Aorta (tissue), 5 donors: ENCODE measurements at regions of chr9 and their contacts with region 1.

Region 1: GRCh38 chr9:115109486-115109885 is 8.5 kb downstream of the TNC start:
- DNase-seq: no peak
- ATAC-seq: no peak
- H3K4me3 ChIP-seq: no peak overlapping the region
- H3K27ac ChIP-seq: no peak overlapping the region
- H3K4me1 ChIP-seq: no peaks in the 10 kb centered on the region
- H3K27me3 ChIP-seq: no peaks in the 10 kb centered on the region

Region 2: DNA sequence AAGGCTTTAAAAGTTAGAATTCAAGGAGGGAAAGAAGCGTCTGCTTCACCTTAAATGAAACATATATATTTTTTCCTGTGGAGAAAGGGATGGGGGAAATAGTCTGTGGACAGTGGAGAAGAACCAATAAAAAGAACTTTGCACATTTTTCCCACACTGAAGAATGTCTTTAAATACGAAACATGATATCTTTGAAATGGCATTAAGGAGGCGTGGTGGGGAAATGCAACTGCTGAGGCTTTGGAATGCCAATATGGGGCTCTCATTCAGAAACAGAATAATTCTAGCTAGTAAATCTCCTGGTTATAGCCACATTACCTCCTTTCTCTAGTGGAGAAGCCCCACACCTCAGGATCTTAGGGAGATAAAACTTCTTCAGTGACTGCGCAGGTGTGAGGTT is 38.3 kb before region 1 on chr9:
- intact Hi-C with region 1: loop called (anchors 5 to 10 kb)
- DNase-seq: no peak
- ATAC-seq: no peak
- H3K4me3 ChIP-seq: no peak overlapping the region
- H3K27ac ChIP-seq: no peak overlapping the region
- H3K4me1 ChIP-seq: peaks cover 0 to 4% of the 10 kb centered on the region in 2 donors
- H3K27me3 ChIP-seq: no peaks in the 10 kb centered on the region